Upper lobe of right lung (tissue), 1 donor: ENCODE measurements at regions of chr21 and their contacts with region 1.

Region 1: DNA sequence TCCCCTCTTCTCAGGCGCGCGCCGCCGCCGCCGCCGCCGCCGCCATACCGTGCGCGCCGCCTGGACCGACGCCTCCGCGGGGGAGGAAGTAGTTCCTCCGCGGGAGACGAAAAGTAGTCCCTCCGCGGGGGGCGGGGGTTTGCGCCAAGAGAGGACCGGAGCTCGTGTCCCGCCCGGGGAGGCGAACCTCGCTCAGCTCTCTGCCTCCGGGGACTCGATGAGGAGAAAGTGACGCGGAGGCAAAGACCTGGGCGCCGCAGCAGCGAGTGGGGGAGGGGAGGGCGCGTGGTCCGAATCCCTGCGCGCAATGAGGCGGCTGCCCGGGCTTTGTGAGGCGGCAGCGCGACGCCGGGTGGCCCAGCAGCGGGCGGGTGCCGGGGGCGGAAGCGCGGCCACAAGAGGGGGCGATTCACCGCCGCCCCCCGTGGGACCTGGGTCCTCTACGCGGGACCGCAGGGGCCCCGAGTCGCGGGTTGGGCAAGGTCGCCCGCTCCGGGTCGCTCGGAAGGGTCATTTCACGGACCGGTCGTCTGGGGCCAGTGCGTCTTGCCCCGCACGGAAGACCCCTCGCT is at the start of gene BRWD1:
- DNase-seq: peak; percentile 92
- ATAC-seq: peak; percentile 90
- H3K4me3 ChIP-seq: peak within 1 kb of the TSS; percentile 83
- H3K27ac ChIP-seq: peak within 1 kb of the TSS; percentile 92
- H3K4me1 ChIP-seq: peaks cover 28% of the 10 kb centered on the region
- H3K27me3 ChIP-seq: no peaks in the 10 kb centered on the region
- CTCF ChIP-seq: peak; percentile 46
- total RNA-seq, gene BRWD1: 40.5 TPM

Region 2: GRCh38 chr21:39388038-39388810 is 74.6 kb after region 1 on chr21:
- intact Hi-C with region 1: loop called (anchors 10 kb)
- DNase-seq: peak; percentile 97
- ATAC-seq: peak; percentile 91
- H3K4me3 ChIP-seq: peak overlapping the region; percentile 53
- H3K27ac ChIP-seq: peak overlapping the region; percentile 49
- H3K4me1 ChIP-seq: peaks cover 26% of the 10 kb centered on the region
- H3K27me3 ChIP-seq: no peaks in the 10 kb centered on the region
- CTCF ChIP-seq: peak; percentile 97